HCT116 (cell line): ENCODE measurements at regions of chr7 and their contacts with region 1.

Region 1: DNA sequence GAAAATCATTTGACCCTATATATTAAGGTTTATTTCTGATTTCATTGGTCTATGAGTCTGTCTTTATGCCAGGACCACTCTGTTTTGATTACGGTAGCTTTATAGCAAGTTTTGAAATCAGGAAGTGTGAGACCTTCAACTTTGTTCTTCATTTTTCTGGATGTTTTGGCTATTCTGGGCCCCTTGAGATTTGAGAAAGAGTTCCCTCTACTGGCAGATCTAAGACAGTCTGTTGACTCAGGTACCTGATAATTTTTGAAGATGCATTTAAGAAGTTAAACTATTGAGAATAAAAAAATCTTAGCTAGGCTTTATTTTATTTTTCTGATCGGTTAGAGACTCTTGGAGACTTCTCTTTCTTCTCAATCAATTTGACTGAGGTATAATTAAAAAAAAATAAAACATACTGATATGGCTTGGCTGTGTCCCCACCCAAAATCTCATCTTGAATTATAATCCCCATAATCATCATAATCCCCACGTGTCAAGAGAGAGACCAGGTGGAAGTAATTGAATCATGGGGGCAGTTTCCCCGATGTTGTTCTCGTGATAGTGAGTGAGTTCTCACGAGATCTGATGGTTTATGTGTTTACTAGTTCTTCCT is 209.2 kb downstream of the SNX10 start:
- DNase-seq: peak; percentile 15
- ATAC-seq: peak; percentile 78
- H3K4me3 ChIP-seq: no peak overlapping the region
- H3K27ac ChIP-seq: no peak overlapping the region
- H3K4me1 ChIP-seq: no peaks in the 10 kb centered on the region
- H3K27me3 ChIP-seq: no peaks in the 10 kb centered on the region
- CTCF ChIP-seq: peak; percentile 58 to 67 (median 67); a peak in 5 of 6 replicates
- POLR2A ChIP-seq: no peak
- RAD21 ChIP-seq: peak; percentile 67

Region 2: GRCh38 chr7:26376175-26376917 is 124.5 kb before region 1 on chr7:
- CTCF ChIA-PET with region 1: interaction called, 6 read pairs
- POLR2A ChIA-PET with region 1: no interaction called
- RAD21 ChIA-PET with region 1: no interaction called
- intact Hi-C with region 1: loop called (anchors 2 kb)
- DNase-seq: no peak
- ATAC-seq: peak; percentile 12; the same call in 1 of the 2 replicates
- H3K4me3 ChIP-seq: no peak overlapping the region
- H3K27ac ChIP-seq: no peak overlapping the region
- H3K4me1 ChIP-seq: no peaks in the 10 kb centered on the region
- H3K27me3 ChIP-seq: no peaks in the 10 kb centered on the region
- CTCF ChIP-seq: no peak
- POLR2A ChIP-seq: no peak
- RAD21 ChIP-seq: no peak